ENCODE measurements at regions of chr20 and their contacts with region 1.

Region 1: DNA sequence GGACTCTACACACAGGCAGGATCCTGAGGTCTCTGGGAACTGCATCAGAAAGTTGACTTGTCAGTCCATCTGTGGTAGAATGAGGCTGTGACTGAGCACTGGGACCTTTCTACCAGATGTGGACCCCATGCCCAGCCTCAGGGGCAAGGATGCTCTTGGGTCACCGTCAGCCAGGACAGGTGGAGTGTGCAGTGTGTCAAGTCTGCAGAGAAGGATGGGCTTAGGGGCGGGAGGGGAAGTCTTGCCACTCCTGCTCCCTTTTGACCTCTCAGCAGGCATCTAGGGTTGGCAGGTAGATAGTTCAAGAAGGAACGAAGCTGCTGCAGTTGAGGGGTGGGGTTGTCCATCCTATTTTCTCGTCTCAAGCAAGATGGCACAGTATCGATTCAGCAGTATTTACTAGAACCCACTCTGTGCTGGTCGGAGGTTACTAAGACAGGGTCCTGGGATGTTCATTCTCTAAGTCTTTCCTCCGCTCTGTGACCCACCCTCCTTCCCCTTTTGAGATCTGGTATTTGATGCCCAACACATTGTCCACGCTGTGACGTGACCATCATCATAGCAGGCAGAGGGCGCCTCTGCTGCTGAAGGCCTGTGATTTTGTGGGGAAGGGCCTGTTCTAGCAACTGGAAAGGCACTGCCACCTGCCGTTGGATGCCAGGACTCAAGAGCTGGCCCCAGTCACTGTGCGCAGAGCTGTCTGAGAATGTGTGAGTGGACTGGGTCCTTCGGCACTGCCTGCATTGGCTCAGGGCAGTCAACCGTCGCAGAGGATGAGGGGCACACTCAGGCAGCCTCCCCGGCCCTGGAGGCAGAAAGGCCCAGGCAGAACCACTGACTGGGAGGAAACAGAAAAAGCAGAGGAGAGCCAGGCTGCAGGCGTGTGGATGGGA is 23.2 kb downstream of the RBCK1 start:
- DNase-seq: peak; percentile 91
- H3K4me3 ChIP-seq: no peak overlapping the region
- H3K27ac ChIP-seq: peak overlapping the region; percentile 22 to 51; a peak in 2 of 4 replicates
- H3K4me1 ChIP-seq: peaks cover 0 to 5% of the 10 kb centered on the region in 2 experiments; a peak in 1 of 4 replicates
- H3K27me3 ChIP-seq: no peaks in the 10 kb centered on the region
- CTCF ChIP-seq: peak; percentile 74
- EP300 ChIP-seq: no peak
- RAD21 ChIP-seq: peak; percentile 83

Region 2: DNA sequence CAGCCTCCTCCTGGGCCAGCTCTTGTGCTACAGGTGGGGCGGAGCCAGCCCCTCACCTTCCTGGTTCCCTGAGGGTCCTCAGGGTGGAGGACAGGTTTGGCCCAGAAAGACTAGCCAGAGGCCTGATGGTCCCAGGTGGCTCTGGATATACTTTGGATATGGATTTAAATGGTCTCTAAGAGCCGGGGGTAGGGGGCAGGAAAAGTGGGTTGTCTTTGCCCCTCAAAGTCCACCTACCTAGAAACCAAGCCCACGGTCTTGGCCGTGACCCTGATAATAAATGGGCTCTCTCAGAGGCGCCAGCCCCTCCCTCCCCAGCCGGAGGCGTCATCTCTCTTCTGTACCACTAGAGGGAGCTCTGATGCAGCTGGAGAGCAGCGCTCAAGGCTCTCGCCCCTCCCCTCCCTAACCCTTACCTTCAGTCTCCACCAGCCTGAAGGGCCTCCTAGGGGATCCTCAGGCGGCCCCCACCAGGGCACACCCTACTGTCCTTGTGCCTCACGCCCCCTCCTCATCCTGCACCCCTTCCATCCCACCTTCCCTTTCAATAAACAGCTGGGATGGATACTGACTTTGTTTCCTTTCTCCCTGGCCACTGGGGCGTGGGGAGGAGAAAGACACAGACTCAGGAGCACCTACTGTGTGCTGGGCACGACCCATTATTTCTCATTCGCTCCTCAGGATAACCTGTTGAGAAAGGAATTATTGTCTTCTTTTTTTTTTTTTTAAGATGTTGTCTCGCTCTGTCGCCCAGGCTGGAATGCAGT is 76.8 kb before region 1 on chr20:
- CTCF ChIA-PET with region 1: interaction called, 94 read pairs
- POLR2A ChIA-PET with region 1: no interaction called
- DNase-seq: peak; percentile 90
- H3K4me3 ChIP-seq: peak overlapping the region in 1 of 2 experiments; percentile 54; a peak in 1 of 4 replicates
- H3K27ac ChIP-seq: no peak overlapping the region; a peak in 1 of 4 replicates
- H3K4me1 ChIP-seq: no peaks in the 10 kb centered on the region; a peak in 1 of 4 replicates
- H3K27me3 ChIP-seq: no peaks in the 10 kb centered on the region
- CTCF ChIP-seq: peak; percentile 91
- EP300 ChIP-seq: no peak
- RAD21 ChIP-seq: peak; percentile 96

Region 3: DNA sequence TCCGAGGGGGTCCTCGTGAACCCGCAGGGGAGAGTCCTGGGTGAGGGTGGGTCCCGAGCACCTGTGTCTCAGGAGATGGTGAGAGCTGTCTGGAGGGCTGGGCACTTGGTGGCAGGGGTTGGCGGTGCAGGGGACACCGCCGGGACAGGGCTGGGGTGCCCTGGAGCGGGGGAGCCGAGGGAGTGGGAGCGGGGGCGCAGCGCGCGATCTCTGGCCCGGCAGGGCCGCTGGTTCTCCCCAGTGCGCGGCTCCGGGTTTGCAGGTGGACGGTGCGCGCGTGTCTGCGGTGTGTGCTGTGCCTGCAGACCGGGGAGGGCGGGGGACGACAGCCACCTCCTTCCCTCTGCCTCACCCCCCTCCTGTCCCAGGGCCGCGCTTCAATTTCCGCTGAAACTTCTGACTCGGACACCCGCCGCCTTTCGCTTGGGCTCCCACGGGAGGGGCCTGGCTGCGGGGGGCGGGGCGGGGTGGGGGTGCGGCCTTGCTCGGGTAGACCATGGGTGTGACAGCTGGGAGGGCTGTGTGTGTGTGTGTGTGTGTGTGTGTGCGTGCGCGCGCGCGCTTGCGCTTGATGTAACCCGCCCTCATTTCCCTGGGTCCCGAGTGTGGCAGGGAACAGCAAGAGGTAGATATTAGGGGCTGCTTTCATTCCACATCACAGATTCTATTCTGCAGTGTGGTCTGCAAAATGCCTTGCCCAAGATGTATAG is 49.5 kb before region 1 on chr20:
- CTCF ChIA-PET with region 1: interaction called, 12 read pairs
- POLR2A ChIA-PET with region 1: interaction called, 10 read pairs
- DNase-seq: peak; percentile 88
- H3K4me3 ChIP-seq: peak overlapping the region; percentile 73 to 79
- H3K27ac ChIP-seq: peak overlapping the region; percentile 18 to 74
- H3K4me1 ChIP-seq: peaks cover 0 to 7% of the 10 kb centered on the region in 2 experiments; a peak in 1 of 4 replicates
- H3K27me3 ChIP-seq: no peaks in the 10 kb centered on the region
- CTCF ChIP-seq: no peak
- EP300 ChIP-seq: no peak
- RAD21 ChIP-seq: no peak

Region 4: DNA sequence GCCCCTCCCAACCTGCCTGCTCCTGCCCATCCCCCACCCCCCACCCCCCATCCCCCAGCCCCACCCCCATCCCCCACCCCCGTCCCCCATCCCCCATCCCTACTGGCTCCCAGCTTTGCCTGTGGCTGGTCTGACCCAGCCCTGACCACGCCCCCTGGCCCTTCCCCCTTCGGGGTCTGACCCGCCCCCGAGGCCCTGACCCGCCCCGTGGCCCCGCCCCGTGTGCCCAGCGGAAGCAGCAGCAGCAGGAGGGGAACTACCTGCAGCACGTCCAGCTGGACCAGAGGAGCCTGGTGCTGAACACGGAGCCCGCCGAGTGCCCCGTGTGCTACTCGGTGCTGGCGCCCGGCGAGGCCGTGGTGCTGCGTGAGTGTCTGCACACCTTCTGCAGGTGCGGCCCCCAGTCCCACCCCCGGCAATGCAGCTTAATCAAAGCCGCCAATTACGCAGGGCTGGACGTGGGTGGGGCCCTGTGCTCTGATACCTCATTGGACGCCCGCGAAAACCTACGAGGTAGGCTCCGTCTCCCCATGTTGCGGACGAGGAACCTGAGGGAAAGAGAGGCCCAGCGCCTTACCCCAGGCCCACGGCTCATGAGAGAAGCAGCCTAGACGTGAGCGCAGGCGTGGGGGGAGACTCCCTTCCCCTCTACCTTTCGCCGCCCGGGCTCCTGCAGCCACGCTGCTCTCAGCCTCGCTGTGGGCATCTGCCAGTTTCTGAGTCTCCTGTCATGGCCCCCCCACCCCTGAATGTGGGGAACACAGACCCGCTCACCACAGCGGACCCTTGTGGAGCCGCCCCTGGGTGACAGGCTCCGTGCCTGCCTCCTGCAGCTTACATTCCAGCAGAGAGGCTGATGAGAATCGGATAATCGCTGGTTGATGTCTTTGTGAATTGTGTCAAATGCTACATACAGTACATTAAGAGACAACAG is 10.3 kb before region 1 on chr20:
- CTCF ChIA-PET with region 1: interaction called, 15 read pairs
- POLR2A ChIA-PET with region 1: no interaction called
- DNase-seq: peak; percentile 80
- H3K4me3 ChIP-seq: no peak overlapping the region
- H3K27ac ChIP-seq: no peak overlapping the region
- H3K4me1 ChIP-seq: no peaks in the 10 kb centered on the region
- H3K27me3 ChIP-seq: no peaks in the 10 kb centered on the region
- CTCF ChIP-seq: no peak
- EP300 ChIP-seq: no peak
- RAD21 ChIP-seq: no peak

Region 5: GRCh38 chr20:478949-479429 is 47.7 kb after region 1 on chr20:
- CTCF ChIA-PET with region 1: interaction called, 16 read pairs
- POLR2A ChIA-PET with region 1: no interaction called
- DNase-seq: peak; percentile 56
- H3K4me3 ChIP-seq: no peak overlapping the region; a peak in 1 of 4 replicates
- H3K27ac ChIP-seq: no peak overlapping the region
- H3K4me1 ChIP-seq: no peaks in the 10 kb centered on the region; a peak in 1 of 4 replicates
- H3K27me3 ChIP-seq: no peaks in the 10 kb centered on the region
- CTCF ChIP-seq: peak; percentile 73
- EP300 ChIP-seq: no peak
- RAD21 ChIP-seq: peak; percentile 69

Region 6: GRCh38 chr20:504632-505075 is 73.4 kb after region 1 on chr20:
- CTCF ChIA-PET with region 1: no interaction called
- POLR2A ChIA-PET with region 1: no interaction called
- DNase-seq: no peak
- H3K4me3 ChIP-seq: no peak overlapping the region
- H3K27ac ChIP-seq: no peak overlapping the region
- H3K4me1 ChIP-seq: peaks cover 0 to 8% of the 10 kb centered on the region in 2 experiments; a peak in 2 of 4 replicates
- H3K27me3 ChIP-seq: no peaks in the 10 kb centered on the region
- CTCF ChIP-seq: no peak
- EP300 ChIP-seq: no peak
- RAD21 ChIP-seq: no peak

Measured in SK-N-SH (cell line).